ENCODE measurements at regions of chr19 and their contacts with region 1.

Region 1: GRCh38 chr19:39846176-39846677 is at the start of gene FBL:
- DNase-seq: peak; percentile 96 to 100
- ATAC-seq: peak; percentile 79 to 91
- H3K4me3 ChIP-seq: peak within 1 kb of the TSS; percentile 86
- H3K27ac ChIP-seq: peak within 1 kb of the TSS; percentile 87 to 90
- H3K4me1 ChIP-seq: peaks cover 44% of the 10 kb centered on the region
- CTCF ChIP-seq: no peak; the same call in 2 of the 3 replicates
- EP300 ChIP-seq: no peak
- POLR2A ChIP-seq: peak; percentile 99
- RAD21 ChIP-seq: no peak
- polyA plus RNA-seq, gene FBL: 716 and 970 TPM in 2 replicates

Region 2: DNA sequence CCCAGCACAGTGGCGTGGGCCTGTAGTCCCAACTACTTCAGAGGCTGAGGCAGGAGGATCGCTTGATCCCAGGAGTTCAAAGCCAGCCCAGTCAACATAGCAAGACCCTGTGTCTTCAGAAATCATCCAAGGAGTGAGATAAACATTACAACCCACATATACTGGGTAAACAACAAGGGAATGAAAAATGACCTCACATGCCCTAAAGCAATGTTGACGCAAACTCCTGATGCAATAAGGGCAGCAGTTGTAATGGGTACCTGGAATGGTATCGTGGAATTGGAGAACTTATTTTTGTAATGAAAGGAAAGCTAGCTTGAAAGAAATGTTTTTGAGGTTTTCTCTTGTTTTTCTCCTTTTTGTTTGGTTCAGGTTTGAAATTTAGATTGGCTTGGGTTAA is 215.0 kb before region 1 on chr19:
- CTCF ChIA-PET with region 1: no interaction called
- POLR2A ChIA-PET with region 1: no interaction called
- DNase-seq: no peak
- ATAC-seq: no peak
- H3K4me3 ChIP-seq: no peak overlapping the region
- H3K27ac ChIP-seq: no peak overlapping the region
- H3K4me1 ChIP-seq: peaks cover 4% of the 10 kb centered on the region; the same call in 1 of the 3 replicates
- CTCF ChIP-seq: no peak
- EP300 ChIP-seq: no peak
- POLR2A ChIP-seq: no peak
- RAD21 ChIP-seq: no peak

Region 3: GRCh38 chr19:39671738-39672363 is 174.4 kb before region 1 on chr19:
- CTCF ChIA-PET with region 1: interaction called, 55 read pairs
- POLR2A ChIA-PET with region 1: no interaction called
- DNase-seq: peak; percentile 69 to 83
- ATAC-seq: peak; percentile 95 to 98
- H3K4me3 ChIP-seq: no peak overlapping the region
- H3K27ac ChIP-seq: no peak overlapping the region
- H3K4me1 ChIP-seq: peaks cover 5% of the 10 kb centered on the region; the same call in 1 of the 3 replicates
- CTCF ChIP-seq: peak; percentile 99
- EP300 ChIP-seq: no peak
- POLR2A ChIP-seq: no peak
- RAD21 ChIP-seq: peak; percentile 99 to 100

Region 4: DNA sequence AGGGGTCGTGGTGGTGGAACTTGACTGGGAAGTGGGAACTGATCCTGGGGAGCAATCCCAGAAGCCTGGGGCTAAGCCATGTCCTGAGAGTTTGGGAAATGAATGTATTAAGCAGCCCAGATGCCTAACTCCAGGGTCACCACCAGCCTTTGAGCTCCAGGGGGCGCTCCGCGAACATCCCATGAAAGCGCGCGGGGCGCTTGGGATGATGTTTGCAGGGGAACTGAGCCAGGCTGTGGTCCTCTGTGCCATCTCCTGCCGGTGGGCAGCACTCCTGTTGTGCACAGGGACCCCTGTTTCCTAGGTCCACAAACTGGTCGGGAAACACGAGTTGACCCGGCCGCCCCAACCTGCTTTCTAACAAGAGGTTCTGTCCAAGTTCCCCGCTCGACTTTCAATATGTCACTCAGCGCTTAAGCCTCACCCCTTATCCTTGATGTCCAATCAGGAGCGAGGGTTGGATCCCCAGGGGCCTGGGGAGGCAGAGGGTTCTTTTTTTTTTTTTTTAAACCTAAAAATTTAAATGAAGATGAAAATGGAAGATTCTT is 53.2 kb before region 1 on chr19:
- CTCF ChIA-PET with region 1: interaction called, 125 read pairs
- POLR2A ChIA-PET with region 1: interaction called, 5 read pairs
- DNase-seq: peak; percentile 88 to 99
- ATAC-seq: peak; percentile 97 to 99
- H3K4me3 ChIP-seq: peak overlapping the region; percentile 40
- H3K27ac ChIP-seq: 0 out of 6 replicates have a peak overlapping the region, but pooled peaks of 1 of the 2 experiments have one; percentile 37
- H3K4me1 ChIP-seq: no peaks in the 10 kb centered on the region
- CTCF ChIP-seq: peak; percentile 100
- EP300 ChIP-seq: no peak
- POLR2A ChIP-seq: no peak
- RAD21 ChIP-seq: peak; percentile 97 to 99

Region 5: DNA sequence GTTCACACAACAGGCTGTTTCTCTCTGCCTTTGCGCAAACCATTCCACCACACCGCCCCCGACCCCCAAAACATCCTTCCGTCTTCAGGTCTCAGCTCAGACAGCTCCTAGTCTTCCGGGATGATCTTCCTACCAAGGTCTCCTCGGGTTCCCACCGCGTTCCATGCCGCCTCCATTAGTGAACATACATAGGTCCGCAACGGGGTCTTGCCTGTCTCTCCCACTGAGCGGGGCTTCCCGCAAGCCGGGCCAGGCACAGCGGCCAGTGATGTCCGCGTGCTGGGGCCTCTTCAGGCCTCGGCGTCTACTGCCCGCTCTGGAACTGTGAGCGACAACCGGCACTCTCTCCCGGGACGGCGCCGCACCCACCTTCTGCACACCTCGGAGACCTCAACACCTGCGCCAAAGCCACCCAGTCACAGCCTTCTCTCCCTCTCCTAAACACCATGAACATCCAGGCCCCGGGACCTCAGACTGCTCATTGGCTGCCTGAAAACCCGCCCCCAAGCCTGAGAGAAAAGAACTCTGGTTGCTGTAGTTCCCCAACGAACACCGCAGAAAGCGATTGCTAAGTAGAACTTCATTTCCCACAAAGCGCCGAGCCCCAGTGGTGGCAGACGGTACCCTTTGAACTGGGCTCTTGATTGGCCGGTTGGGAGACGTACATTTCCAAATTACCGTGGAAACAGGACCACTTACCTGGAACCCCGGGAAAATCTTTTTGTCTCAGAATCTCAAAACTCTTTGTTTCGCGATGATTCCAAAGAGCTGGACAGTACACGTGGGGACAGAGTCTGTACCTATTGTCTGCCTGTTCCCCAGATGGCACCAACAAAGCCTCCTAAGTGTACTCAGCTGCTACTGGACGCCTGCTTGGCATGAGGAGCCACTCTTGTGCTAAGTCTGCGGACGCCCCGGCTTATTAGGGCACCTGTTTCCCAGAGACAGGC is 21.8 kb before region 1 on chr19:
- CTCF ChIA-PET with region 1: interaction called, 64 read pairs
- POLR2A ChIA-PET with region 1: interaction called, 4 read pairs
- DNase-seq: no peak
- ATAC-seq: peak in 1 of 2 experiments; percentile 21; a peak in 3 of 6 replicates
- H3K4me3 ChIP-seq: no peak overlapping the region
- H3K27ac ChIP-seq: no peak overlapping the region
- H3K4me1 ChIP-seq: no peaks in the 10 kb centered on the region
- CTCF ChIP-seq: no peak
- EP300 ChIP-seq: no peak
- POLR2A ChIP-seq: no peak
- RAD21 ChIP-seq: no peak

Region 6: DNA sequence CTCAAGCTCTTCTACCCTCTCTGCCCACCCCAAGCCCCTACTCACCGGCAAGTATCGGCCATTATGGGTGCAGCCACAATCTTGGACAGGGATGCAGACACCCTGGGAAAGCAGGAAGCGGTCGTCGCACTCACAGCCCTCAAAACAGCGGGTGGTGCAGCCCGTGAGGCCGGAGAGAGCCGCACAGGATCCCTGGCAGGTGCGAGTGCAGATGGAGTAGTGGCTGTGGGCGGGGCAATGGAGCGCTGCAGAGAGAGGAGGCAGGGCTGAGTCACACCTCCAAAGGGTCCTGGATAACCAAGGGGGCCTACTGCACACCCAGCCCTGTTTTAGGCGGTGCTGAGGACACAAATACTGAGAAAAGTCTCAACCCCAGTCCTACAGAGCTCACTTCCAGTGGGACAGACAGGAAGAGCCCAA is 24.0 kb after region 1 on chr19:
- CTCF ChIA-PET with region 1: interaction called, 26 read pairs
- POLR2A ChIA-PET with region 1: interaction called, 4 read pairs
- DNase-seq: no peak
- ATAC-seq: no peak
- H3K4me3 ChIP-seq: no peak overlapping the region
- H3K27ac ChIP-seq: no peak overlapping the region
- H3K4me1 ChIP-seq: no peaks in the 10 kb centered on the region
- CTCF ChIP-seq: no peak
- EP300 ChIP-seq: no peak
- POLR2A ChIP-seq: no peak
- RAD21 ChIP-seq: no peak

Region 7: DNA sequence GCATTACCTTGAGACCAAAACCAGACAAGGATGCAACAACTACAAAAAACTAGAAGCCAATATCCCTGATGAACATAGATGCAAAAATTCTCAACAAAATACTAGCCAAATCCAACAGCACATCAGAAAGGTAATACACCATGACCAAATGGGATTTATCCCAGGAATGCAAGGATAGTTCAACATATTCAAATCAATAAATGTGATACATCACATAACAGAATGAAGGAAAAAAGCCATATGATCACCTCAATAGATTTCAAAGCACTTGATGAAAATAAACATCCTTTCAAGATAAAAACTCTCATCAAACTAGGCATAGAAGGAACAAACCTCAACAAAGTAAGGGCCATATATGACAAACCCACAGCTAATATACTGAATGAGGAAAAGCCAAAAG is 140.4 kb after region 1 on chr19:
- CTCF ChIA-PET with region 1: no interaction called
- POLR2A ChIA-PET with region 1: no interaction called
- DNase-seq: peak in 1 of 2 experiments; percentile 43
- ATAC-seq: no peak
- H3K4me3 ChIP-seq: no peak overlapping the region
- H3K27ac ChIP-seq: no peak overlapping the region
- H3K4me1 ChIP-seq: no peaks in the 10 kb centered on the region
- CTCF ChIP-seq: no peak
- EP300 ChIP-seq: no peak
- POLR2A ChIP-seq: no peak
- RAD21 ChIP-seq: no peak